ENCODE measurements at regions of chr11 and their contacts with region 1.

Region 1: DNA sequence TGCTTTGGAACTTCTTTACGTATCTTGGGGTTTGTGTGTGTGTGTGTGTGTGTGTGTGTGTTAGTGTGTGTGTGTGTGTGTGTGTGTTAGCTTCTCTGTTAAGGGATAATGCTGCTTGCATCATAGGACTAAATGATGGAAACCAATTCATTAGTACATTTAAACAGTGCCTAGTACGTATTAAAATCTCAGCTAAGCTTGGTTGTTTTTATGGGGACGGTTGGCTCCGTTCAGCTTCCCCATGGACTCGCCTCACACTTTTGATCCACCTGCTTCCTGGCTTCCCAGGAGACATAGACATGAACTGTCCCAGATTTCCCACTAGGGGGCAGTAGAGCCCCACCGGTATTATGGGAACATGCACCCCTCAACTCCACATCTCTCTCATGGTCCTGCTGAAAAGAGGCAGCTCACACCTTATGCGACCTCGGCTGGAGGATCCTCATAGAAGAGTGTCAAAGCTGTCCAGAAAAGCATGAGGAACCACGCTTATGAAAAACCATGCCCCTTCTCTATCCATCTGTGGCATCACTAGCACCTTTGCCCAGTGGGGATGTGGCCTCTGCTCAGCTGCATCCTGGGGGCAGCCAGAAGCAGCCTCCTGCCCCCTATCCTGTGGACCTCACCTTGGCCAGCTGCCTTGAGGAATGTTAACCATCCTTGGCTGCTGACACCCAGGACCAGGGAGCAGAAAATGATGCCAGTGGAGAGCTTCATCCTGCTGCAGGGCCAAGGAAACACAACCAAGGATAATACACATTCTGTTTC is 9.7 kb upstream of the SAAL1 start:
- DNase-seq: peak; percentile 37 to 67 (median 63)
- ATAC-seq: peak; percentile 92
- H3K4me3 ChIP-seq: no peak overlapping the region
- H3K4me3 Mint-ChIP-seq: no peak overlapping the region
- H3K27ac ChIP-seq: no peak overlapping the region
- H3K27ac Mint-ChIP-seq: no peak overlapping the region
- H3K4me1 ChIP-seq: no peaks in the 10 kb centered on the region
- H3K4me1 Mint-ChIP-seq: peaks cover 0 to 5% (median 0%) of the 10 kb centered on the region in 7 donors
- H3K27me3 ChIP-seq: no peaks in the 10 kb centered on the region
- H3K27me3 Mint-ChIP-seq: peaks cover 17 to 40% (median 29%) of the 10 kb centered on the region in 5 donors

Region 2: DNA sequence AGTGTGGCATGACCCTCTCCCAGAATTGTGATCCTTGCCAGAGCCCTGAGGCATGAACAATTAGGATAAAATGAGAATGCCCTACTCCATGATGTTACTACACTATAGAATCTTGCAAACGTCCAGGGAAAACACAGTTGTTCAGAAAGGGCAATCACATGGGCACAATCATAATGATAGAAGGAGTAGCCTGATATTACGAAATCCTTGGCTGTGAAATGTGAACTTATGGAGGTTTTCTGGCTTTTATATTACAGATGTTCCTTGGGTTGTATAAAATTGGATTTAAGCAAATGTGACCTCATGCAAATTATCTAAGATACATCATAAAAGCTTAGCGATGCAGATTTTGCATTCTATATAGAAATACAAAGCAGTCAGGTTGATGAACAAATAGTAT is 40.1 kb before region 1 on chr11:
- CTCF ChIA-PET with region 1: interaction called, 10 read pairs
- POLR2A ChIA-PET with region 1: no interaction called
- intact Hi-C with region 1: no loop called
- DNase-seq: no peak
- ATAC-seq: no peak
- H3K4me3 ChIP-seq: no peak overlapping the region
- H3K4me3 Mint-ChIP-seq: no peak overlapping the region
- H3K27ac ChIP-seq: no peak overlapping the region
- H3K27ac Mint-ChIP-seq: no peak overlapping the region
- H3K4me1 ChIP-seq: no peaks in the 10 kb centered on the region
- H3K4me1 Mint-ChIP-seq: no peaks in the 10 kb centered on the region
- H3K27me3 ChIP-seq: no peaks in the 10 kb centered on the region
- H3K27me3 Mint-ChIP-seq: no peaks in the 10 kb centered on the region

Region 3: GRCh38 chr11:18540207-18541009 is 424.9 kb after region 1 on chr11:
- CTCF ChIA-PET with region 1: no interaction called
- POLR2A ChIA-PET with region 1: no interaction called
- intact Hi-C with region 1: loop called in 1 of 2 experiments (anchors 1 kb)
- DNase-seq: peak in 6 of 9 donors; percentile 30 to 60 (median 44)
- ATAC-seq: peak; percentile 73
- H3K4me3 ChIP-seq: no peak overlapping the region
- H3K4me3 Mint-ChIP-seq: no peak overlapping the region
- H3K27ac ChIP-seq: no peak overlapping the region
- H3K27ac Mint-ChIP-seq: peak overlapping the region in 2 of 9 donors; percentile 2 to 13
- H3K4me1 ChIP-seq: no peaks in the 10 kb centered on the region
- H3K4me1 Mint-ChIP-seq: peaks cover 0 to 8% (median 0%) of the 10 kb centered on the region in 7 donors
- H3K27me3 ChIP-seq: no peaks in the 10 kb centered on the region
- H3K27me3 Mint-ChIP-seq: no peaks in the 10 kb centered on the region

Region 4: DNA sequence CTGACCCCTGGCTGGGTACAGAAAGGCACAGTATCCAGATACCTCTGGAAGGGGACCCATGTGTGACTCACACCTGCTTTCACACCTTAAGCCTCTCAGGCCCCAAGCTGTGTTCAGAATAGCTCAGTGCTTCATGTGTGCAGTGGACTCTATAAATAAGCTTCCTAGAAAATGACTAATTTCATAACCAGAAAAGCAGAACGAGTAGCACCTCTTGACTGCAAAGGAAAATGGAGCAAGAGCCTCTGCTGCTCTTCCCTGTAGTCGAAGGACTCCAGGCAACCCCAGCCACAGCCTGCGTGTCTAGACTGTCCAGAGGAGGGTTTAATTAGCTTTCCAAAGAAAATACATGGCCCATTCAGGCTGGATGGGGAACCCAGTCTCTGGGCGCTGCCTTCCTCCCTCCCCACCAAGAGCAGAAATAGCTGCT is 652.9 kb after region 1 on chr11:
- CTCF ChIA-PET with region 1: interaction called, 16 read pairs
- POLR2A ChIA-PET with region 1: no interaction called
- intact Hi-C with region 1: loop called (anchors 1 kb)
- DNase-seq: no peak
- ATAC-seq: no peak
- H3K4me3 ChIP-seq: no peak overlapping the region
- H3K4me3 Mint-ChIP-seq: no peak overlapping the region
- H3K27ac ChIP-seq: no peak overlapping the region
- H3K27ac Mint-ChIP-seq: no peak overlapping the region
- H3K4me1 ChIP-seq: no peaks in the 10 kb centered on the region
- H3K4me1 Mint-ChIP-seq: peaks cover 0 to 28% (median 0%) of the 10 kb centered on the region in 7 donors
- H3K27me3 ChIP-seq: no peaks in the 10 kb centered on the region
- H3K27me3 Mint-ChIP-seq: peaks cover 4 to 27% (median 16%) of the 10 kb centered on the region in 5 donors

Region 5: DNA sequence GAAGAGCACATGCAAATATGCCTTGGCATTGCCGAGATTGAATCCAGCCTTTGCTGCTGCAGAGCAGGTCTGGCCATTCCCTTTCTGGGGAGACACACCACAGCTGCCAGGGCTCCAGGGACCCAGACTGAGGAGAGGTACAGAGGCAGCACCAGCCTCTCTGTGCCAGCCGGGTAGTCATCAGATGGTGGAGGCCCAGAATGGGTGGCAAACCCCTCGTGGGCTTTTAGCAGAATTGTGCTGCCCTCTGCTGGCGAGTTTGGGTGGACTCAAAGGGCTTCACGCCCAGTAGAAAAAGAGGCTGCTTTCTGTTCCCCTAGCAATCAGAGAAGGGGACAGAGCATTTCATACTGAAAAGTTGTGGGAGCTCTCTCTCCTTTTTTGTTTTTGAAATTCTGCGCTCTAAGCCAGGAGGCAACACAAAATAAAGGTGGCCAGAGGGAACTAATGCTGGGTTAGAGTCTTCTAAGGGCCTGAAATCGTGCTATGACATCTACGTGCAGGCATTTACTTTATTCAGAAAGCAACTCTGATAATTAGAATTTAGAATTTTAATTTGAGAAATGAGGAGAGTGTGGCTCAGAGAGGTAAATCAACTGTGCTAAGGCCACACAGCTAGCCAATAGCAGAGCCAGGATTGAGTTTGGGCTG is 1438.3 kb after region 1 on chr11:
- CTCF ChIA-PET with region 1: no interaction called
- POLR2A ChIA-PET with region 1: no interaction called
- intact Hi-C with region 1: loop called in 1 of 2 experiments (anchors 10 kb)
- DNase-seq: peak; percentile 12 to 68 (median 38)
- ATAC-seq: peak; percentile 65
- H3K4me3 ChIP-seq: no peak overlapping the region
- H3K4me3 Mint-ChIP-seq: no peak overlapping the region
- H3K27ac ChIP-seq: no peak overlapping the region
- H3K27ac Mint-ChIP-seq: no peak overlapping the region
- H3K4me1 ChIP-seq: no peaks in the 10 kb centered on the region
- H3K4me1 Mint-ChIP-seq: peaks cover 0 to 4% (median 0%) of the 10 kb centered on the region in 7 donors
- H3K27me3 ChIP-seq: no peaks in the 10 kb centered on the region
- H3K27me3 Mint-ChIP-seq: peaks cover 6 to 17% (median 9%) of the 10 kb centered on the region in 5 donors

Measured in naive thymus-derived CD4-positive, alpha-beta T cell (primary cell).